Activated CD4-positive, alpha-beta memory T cell treated with anti-CD3 and anti-CD28 coated beads for 36 hours (primary cell): ENCODE measurements at regions of chr14 and their contacts with region 1.

Region 1: DNA sequence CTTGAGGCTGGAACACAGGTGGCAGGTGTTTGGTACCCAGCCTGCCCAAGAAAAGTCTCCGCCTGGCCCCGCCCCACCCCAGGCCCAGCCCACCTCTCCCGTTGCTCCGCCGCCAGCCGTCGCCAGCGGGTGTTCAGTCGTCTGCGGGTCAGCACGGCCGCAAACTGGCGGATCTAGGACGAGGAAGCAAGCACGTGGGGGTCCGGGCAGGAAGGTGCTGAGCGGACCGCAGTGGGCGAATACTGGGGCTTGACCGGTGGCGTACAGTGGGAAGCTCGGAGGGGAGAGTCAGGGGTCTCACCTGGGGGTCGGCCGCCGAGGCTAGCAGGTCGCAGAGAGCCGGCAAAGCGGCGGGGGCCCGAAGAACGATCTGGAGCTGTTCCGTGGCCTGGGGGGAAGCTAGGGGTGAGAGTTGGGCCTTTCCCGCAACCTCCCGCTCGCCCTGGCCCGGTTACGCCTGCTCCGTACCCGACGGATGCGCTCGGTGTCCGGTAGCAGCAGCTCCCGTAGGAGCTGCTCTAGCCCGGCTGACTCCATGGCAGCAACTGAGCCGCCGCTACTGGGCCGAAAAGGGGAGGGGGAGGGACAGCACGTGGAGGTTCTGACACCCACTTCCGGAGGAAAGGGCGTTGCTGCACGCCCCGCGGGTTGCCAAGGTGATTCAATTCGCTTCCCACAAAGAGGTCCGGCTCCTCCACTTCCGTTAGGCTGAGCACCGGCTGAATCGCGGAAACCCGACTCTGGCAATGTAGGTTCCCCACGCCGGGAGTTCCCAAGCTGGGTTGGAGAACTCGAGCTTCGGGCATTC is at the start of gene IPO4:
- DNase-seq: peak; percentile 97
- H3K4me3 Mint-ChIP-seq: peak within 1 kb of the TSS; percentile 89
- H3K27ac Mint-ChIP-seq: peak within 1 kb of the TSS; percentile 74
- H3K4me1 Mint-ChIP-seq: peaks cover 40% of the 10 kb centered on the region
- H3K27me3 Mint-ChIP-seq: no peaks in the 10 kb centered on the region
- total RNA-seq, gene IPO4: 69.5 to 72.6 TPM

Region 2: GRCh38 chr14:22536853-22537338 is 1651.6 kb before region 1 on chr14:
- CTCF ChIA-PET with region 1: no interaction called
- POLR2A ChIA-PET with region 1: no interaction called
- intact Hi-C with region 1: no loop called
- DNase-seq: peak; percentile 92
- H3K4me3 Mint-ChIP-seq: peak overlapping the region; percentile 81
- H3K27ac Mint-ChIP-seq: peak overlapping the region; percentile 99
- H3K4me1 Mint-ChIP-seq: peaks cover 95% of the 10 kb centered on the region
- H3K27me3 Mint-ChIP-seq: no peaks in the 10 kb centered on the region

Region 3: GRCh38 chr14:24135834-24136542 is 52.5 kb before region 1 on chr14 and contains the start of gene PSME1:
- CTCF ChIA-PET with region 1: interaction called, 3 read pairs
- POLR2A ChIA-PET with region 1: interaction called, 10 read pairs
- intact Hi-C with region 1: loop called (anchors 1 kb)
- DNase-seq: peak; percentile 97
- H3K4me3 Mint-ChIP-seq: peak within 1 kb of the TSS; percentile 95
- H3K27ac Mint-ChIP-seq: peak within 1 kb of the TSS; percentile 96
- H3K4me1 Mint-ChIP-seq: peaks cover 54% of the 10 kb centered on the region
- H3K27me3 Mint-ChIP-seq: no peaks in the 10 kb centered on the region
- total RNA-seq, gene PSME1: 403 to 427 TPM

Region 4: DNA sequence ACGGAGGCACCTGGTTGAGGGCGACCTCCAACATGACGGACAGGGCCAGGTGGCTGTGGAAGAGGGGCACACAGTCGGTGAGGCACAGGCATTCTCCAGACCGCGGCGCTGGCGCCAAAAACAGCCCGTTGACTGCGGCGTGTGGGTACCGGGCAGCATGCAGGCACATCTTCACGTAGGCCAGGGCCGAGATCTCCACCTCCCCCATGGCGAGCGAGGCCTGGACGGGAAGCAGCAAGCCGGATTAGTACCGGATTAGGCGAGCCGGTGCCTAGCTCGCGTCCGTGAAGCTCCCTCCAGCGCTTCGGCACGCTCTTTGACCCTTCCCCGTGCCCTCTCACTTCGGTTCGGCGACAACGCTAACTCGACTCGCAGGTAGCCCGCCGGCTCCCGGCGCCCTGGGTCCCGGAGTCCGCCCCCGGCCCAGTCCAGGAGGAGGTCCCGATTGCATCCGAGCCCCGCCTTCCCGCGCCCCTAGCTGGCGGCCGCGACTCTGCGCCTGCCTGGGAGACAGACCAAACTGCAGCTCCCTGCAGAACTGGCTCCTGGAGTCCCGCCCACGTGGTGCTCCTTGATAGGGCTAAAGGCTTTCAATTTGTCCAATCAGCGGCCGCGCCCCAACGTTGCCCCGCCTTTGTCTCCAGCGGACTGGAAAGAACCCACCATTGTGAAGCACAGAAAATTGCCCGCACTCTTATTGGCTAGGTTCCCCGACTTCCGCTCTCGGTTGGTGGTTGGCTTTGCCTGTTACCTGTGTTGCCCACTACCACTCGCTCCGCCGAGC is 47.2 kb before region 1 on chr14 and contains the start of gene EMC9:
- CTCF ChIA-PET with region 1: interaction called, 3 read pairs
- POLR2A ChIA-PET with region 1: interaction called, 10 read pairs
- intact Hi-C with region 1: loop called (anchors 1 kb)
- DNase-seq: peak; percentile 100
- H3K4me3 Mint-ChIP-seq: peak within 1 kb of the TSS; percentile 97
- H3K27ac Mint-ChIP-seq: peak within 1 kb of the TSS; percentile 94
- H3K4me1 Mint-ChIP-seq: peaks cover 65% of the 10 kb centered on the region
- H3K27me3 Mint-ChIP-seq: no peaks in the 10 kb centered on the region
- total RNA-seq, gene EMC9: 40.0 to 40.9 TPM

Region 5: DNA sequence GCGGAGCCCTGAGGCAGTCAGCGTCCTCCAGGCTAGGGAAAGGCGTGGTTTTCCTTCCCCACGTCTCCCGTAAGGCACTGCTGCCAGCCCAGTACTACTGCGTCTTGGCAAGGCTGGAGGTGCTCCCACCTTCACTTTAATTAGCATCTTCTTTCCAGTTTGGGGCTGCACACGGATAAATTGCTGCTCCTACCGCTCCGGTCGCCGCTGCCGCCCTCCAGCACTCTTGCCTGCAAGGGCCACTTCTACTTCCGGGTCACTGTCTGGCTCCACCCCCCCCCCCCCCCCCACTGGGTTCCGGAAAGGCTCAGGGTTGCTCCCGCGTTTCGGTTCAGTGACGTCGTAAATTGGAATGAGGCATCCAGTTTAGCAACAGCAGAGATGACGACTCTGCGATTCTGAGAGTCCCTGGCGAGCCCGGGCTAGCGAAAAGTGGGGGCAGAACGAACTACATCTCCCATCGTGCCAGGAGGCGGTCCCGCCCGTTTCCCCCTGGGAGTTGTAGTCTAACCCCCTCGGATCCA is 43.7 kb after region 1 on chr14 and contains the start of gene NEDD8:
- CTCF ChIA-PET with region 1: no interaction called
- POLR2A ChIA-PET with region 1: no interaction called
- intact Hi-C with region 1: loop called (anchors 2 kb)
- DNase-seq: peak; percentile 96
- H3K4me3 Mint-ChIP-seq: peak within 1 kb of the TSS; percentile 93
- H3K27ac Mint-ChIP-seq: peak within 1 kb of the TSS; percentile 90
- H3K4me1 Mint-ChIP-seq: peaks cover 55% of the 10 kb centered on the region
- H3K27me3 Mint-ChIP-seq: no peaks in the 10 kb centered on the region
- total RNA-seq, gene NEDD8: 202 to 213 TPM